ENCODE measurements at regions of chr12 and their contacts with region 1.

Region 1: DNA sequence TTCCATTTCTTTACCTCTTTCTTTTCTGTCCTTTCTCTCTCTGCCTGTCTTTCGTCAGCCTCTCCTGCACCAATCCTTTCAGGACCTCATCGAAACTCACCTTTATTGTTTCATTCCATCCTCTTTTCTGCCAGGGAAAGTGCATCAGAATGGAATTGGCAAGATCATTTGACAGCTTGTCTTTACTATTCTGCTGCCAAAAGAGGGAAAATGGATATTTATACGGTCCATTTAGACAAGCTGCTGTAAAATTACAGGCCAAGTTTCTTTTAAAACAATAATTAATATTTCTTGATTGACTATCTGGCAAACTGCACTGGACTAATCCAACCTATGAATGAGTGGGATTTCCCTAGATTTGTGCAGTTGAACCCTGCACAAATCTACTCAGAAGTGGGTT is 7.6 kb upstream of the SRGAP1 start:
- DNase-seq: no peak
- ATAC-seq: no peak
- H3K4me3 ChIP-seq: no peak overlapping the region
- H3K27ac ChIP-seq: no peak overlapping the region
- H3K4me1 ChIP-seq: no peaks in the 10 kb centered on the region
- H3K27me3 ChIP-seq: no peaks in the 10 kb centered on the region
- CTCF ChIP-seq: no peak
- POLR2A ChIP-seq: no peak

Region 2: DNA sequence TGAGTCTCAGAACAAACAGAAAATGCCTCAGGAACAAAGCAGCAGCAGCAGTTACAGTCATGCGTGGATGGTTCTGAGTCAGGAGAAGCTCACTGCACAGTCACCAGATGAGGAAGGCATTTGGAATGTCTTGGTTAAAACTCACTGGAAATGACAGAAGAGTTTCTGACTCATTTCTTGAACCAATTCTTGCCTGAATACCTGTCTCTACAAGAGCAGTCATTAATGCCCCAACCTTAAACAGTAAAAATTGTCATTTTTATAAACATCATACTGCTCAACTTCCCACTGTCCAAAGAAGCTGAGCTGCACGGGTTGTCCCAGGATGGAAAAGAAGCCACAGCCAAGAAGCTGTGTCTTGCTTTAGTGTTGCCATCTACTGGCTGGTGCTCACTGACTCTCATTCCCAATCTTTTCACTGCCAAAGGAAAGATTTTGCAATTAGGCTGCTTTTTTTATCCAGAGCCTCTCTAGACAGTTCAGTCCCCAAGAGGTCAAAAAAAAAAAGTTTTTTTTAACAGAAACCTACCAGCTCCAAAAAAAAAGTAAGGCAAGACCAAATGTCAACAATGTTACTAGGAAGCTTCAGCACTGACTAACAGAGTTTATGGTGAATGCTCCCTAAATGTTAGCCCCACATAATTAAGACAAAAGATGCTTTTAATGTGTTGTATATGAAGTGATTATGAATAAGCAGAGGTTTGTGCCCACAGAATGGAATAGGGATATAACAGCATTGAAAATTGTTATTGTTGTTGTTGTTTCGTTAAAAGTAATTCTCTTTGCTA is 344.8 kb after region 1 on chr12:
- intact Hi-C with region 1: loop called (anchors 10 kb)
- DNase-seq: peak; percentile 57 to 75 (median 62)
- ATAC-seq: peak; percentile 85
- H3K4me3 ChIP-seq: no peak overlapping the region
- H3K27ac ChIP-seq: peak overlapping the region in 1 of 4 donors; percentile 10
- H3K4me1 ChIP-seq: no peaks in the 10 kb centered on the region
- H3K27me3 ChIP-seq: no peaks in the 10 kb centered on the region
- CTCF ChIP-seq: peak; percentile 23 to 89 (median 76)
- POLR2A ChIP-seq: no peak

Region 3: DNA sequence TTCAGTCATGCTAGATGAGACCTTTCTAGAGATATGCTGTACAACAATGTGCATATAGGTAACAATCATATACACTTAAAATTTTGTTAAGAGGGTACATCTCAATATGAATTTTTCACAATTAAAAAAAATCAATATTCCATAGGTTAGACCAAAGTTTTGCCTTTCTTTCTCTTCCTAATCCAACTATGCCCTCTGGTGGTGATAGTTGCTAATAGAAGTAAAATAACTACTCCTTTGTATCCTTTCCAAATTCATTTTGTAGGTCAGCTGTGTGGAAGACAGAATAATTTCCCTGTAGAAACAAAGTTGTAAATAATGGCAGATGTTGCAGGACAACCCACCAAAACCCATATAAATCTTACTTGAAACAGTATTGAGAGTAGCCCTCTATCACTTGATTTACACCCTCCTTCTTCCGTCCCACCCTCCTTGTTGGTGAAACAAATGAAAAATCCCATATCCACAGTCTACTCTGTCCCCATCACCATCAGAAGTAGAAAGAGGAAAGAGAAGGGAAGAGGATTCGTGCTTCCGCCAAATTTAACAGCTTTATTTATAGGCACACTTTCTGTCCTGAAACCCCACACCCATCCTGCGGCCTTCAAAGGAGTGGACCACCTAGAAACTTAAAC is 419.3 kb after region 1 on chr12:
- intact Hi-C with region 1: loop called (anchors 5 kb)
- DNase-seq: no peak
- ATAC-seq: peak; percentile 50
- H3K4me3 ChIP-seq: no peak overlapping the region
- H3K27ac ChIP-seq: no peak overlapping the region
- H3K4me1 ChIP-seq: no peaks in the 10 kb centered on the region
- H3K27me3 ChIP-seq: no peaks in the 10 kb centered on the region
- CTCF ChIP-seq: peak; percentile 38 to 84 (median 77)
- POLR2A ChIP-seq: no peak